Ascending aorta (tissue), 2 donors: ENCODE measurements at regions of chr2 and their contacts with region 1.

Region 1: GRCh38 chr2:217886720-217887309 is 116.0 kb downstream of the TNS1 start:
- DNase-seq: peak in 1 of 2 donors; percentile 81
- H3K4me3 ChIP-seq: no peak overlapping the region
- H3K27ac ChIP-seq: peak overlapping the region; percentile 76 to 98
- H3K4me1 ChIP-seq: peaks cover 11 to 33% of the 10 kb centered on the region in 2 donors
- H3K27me3 ChIP-seq: no peaks in the 10 kb centered on the region
- CTCF ChIP-seq: peak; percentile 69 to 78 (median 73)

Region 2: GRCh38 chr2:217338306-217338916 is 548.4 kb before region 1 on chr2:
- intact Hi-C with region 1: no loop called
- DNase-seq: no peak
- H3K4me3 ChIP-seq: no peak overlapping the region
- H3K27ac ChIP-seq: no peak overlapping the region
- H3K4me1 ChIP-seq: peaks cover 0 to 5% of the 10 kb centered on the region in 2 donors
- H3K27me3 ChIP-seq: no peaks in the 10 kb centered on the region
- CTCF ChIP-seq: no peak

Region 3: DNA sequence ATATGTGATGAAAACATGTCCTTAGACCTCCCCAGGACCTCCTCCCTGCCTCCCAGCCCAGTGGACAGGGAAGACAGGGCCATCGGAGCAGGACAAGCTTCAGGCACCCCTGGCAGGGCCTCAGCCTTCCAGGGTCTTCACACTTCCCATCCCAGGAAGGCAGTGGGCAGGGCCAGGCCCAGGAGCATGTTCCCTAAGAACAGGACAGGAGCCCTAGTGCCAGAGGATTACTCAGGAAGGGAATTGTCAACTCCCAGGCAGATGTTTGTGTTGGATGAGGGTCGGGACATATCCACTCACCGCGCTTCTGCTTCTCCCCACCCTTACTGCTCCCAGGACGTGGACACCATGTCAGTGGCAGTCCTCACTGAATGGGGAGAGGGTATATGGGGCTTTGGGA is 22.9 kb before region 1 on chr2:
- intact Hi-C with region 1: no loop called
- DNase-seq: no peak
- H3K4me3 ChIP-seq: no peak overlapping the region
- H3K27ac ChIP-seq: peak overlapping the region; percentile 87 to 89
- H3K4me1 ChIP-seq: peaks cover 35 to 69% of the 10 kb centered on the region in 2 donors
- H3K27me3 ChIP-seq: no peaks in the 10 kb centered on the region
- CTCF ChIP-seq: no peak

Region 4: GRCh38 chr2:217875138-217875537 is 11.7 kb before region 1 on chr2:
- intact Hi-C with region 1: loop called (anchors 2 kb)
- DNase-seq: no peak
- H3K4me3 ChIP-seq: no peak overlapping the region
- H3K27ac ChIP-seq: peak overlapping the region; percentile 56 to 62
- H3K4me1 ChIP-seq: peaks cover 0 to 48% of the 10 kb centered on the region in 2 donors
- H3K27me3 ChIP-seq: no peaks in the 10 kb centered on the region
- CTCF ChIP-seq: no peak

Region 5: GRCh38 chr2:217943446-217944389 is 56.9 kb after region 1 on chr2:
- intact Hi-C with region 1: loop called (anchors 2 kb)
- DNase-seq: peak; percentile 36 to 92
- H3K4me3 ChIP-seq: peak overlapping the region; percentile 64 to 81
- H3K27ac ChIP-seq: peak overlapping the region; percentile 98 to 100
- H3K4me1 ChIP-seq: peaks cover 9 to 40% of the 10 kb centered on the region in 2 donors
- H3K27me3 ChIP-seq: no peaks in the 10 kb centered on the region
- CTCF ChIP-seq: peak; percentile 37 to 54 (median 38)

Region 6: DNA sequence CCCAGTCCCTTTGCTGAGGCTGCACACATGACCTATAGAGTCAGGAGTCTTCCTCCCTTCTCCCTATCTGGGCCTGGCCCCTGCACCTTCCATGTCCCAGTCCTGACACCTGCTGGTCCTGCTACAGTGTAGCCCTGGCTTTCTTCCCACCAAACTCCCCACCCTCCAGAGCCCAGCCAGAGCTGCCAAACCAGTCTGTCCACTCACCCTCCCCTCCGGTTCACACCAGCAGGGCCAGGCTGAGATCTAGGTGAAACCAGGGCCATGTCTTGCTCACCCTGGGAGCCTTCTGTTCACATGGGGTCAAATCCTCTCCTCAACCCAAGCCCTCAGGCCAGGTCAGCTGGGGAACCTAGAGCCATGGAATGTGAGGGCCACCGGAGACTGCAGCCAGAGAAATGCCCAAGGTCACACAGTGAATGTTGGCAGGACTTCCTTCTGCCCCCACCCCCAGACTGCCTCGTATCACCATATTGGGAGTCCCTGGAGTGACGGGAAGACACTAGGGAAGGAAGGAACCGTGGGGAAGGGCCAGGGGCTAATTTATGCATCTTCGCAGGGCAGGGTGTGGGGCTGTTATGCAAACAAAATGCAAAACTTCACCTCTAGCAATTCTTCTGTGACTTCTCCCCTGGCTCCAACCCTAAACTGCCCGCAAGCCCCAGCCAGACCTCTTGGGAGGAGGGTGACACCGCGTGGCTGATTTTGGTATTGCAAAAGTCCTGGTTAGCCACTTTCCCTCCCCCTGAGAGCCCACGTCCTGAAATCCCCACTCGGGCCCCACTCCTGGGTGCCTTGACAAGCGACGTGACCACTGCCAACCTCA is 101.4 kb after region 1 on chr2:
- intact Hi-C with region 1: loop called (anchors 2 kb)
- DNase-seq: peak in 1 of 2 donors; percentile 93
- H3K4me3 ChIP-seq: peak overlapping the region; percentile 19 to 47
- H3K27ac ChIP-seq: peak overlapping the region; percentile 57 to 68
- H3K4me1 ChIP-seq: peaks cover 8 to 20% of the 10 kb centered on the region in 2 donors
- H3K27me3 ChIP-seq: no peaks in the 10 kb centered on the region
- CTCF ChIP-seq: peak; percentile 91 to 97 (median 95)

Region 7: DNA sequence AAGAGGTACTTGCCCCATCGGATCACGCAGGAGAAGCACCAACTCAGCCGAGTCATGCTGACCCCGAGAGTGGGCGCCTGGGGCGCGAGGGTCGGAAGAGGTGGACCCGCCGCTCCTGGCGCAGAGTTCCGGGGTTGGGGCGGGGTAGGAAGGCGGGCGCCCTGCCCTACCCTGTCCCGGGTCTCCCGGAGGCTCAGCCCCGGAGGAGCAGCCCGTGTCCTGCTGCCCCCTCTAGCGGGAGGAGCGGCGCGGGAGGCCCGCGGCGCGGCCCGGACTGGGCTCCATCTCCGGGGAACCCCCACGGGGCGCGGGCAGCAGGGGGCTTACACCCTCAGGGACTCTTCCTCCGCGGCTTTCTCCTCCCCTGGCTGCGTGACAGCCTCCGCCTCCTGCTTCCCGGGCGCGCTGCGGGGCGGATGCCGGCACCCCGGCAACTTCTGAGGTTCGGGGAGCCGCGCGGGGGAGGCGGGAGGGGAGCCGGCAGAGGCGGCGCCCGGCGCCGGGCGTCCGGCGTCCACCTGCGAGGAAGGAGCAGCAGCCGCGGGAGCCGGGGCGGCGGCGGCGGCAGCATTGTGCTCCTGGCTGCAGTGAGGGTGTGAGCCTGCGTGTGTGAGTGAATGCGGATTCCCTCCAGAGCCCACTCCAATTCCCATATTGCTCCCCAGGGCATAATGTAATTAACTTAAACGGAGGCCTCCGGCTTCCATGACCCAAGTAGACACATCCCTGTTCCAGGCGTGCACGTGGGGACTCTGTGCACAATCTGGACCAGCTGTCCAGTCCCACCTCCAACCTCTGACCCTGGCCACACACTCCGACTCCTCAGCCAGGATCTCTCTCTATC is 123.5 kb after region 1 on chr2:
- intact Hi-C with region 1: no loop called
- DNase-seq: peak in 1 of 2 donors; percentile 77
- H3K4me3 ChIP-seq: peak overlapping the region; percentile 71 to 82
- H3K27ac ChIP-seq: peak overlapping the region; percentile 32 to 33
- H3K4me1 ChIP-seq: peaks cover 0 to 27% of the 10 kb centered on the region in 2 donors
- H3K27me3 ChIP-seq: no peaks in the 10 kb centered on the region
- CTCF ChIP-seq: peak; percentile 67 to 86 (median 73)

Region 8: DNA sequence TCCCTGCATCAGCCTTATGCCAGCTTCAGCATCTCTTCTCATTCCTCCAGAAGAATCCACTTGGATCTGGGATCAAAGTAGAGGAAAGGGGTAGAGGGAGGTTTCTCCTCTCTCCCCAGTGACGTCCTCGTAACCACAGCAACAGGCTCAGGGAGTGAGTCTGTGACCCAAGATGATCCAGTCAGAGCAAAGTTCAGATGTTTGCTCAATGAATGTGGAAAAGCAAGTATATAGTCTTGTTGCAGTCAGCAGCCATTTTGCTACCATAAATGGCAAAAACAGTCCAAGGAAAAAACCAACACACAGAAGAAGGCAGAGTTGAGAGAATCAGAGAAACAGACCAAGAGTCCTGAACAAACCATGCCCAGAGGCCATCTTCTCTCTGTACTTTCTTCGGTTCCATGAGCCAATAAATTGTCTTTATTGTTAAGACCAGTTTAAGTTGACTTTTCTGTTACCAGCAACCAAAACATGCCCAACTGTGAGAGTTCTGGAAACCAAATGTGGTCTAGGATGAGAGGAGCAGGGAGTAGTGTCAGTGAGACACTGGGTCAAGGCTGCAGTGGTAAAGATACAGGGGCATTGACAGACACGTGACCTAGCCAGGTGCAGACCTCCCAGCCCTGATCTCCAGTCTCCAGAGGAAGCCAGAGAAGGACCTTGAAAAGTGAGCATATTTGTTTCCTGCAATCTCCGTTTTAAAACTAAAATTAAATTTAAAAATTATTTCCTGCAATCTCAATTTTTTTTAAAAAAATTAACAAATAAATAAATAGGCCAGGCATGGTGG is 283.1 kb after region 1 on chr2:
- intact Hi-C with region 1: no loop called
- DNase-seq: no peak
- H3K4me3 ChIP-seq: no peak overlapping the region
- H3K27ac ChIP-seq: no peak overlapping the region
- H3K4me1 ChIP-seq: no peaks in the 10 kb centered on the region
- H3K27me3 ChIP-seq: no peaks in the 10 kb centered on the region
- CTCF ChIP-seq: no peak